ENCODE measurements at regions of chr3 and their contacts with region 1.

Region 1: DNA sequence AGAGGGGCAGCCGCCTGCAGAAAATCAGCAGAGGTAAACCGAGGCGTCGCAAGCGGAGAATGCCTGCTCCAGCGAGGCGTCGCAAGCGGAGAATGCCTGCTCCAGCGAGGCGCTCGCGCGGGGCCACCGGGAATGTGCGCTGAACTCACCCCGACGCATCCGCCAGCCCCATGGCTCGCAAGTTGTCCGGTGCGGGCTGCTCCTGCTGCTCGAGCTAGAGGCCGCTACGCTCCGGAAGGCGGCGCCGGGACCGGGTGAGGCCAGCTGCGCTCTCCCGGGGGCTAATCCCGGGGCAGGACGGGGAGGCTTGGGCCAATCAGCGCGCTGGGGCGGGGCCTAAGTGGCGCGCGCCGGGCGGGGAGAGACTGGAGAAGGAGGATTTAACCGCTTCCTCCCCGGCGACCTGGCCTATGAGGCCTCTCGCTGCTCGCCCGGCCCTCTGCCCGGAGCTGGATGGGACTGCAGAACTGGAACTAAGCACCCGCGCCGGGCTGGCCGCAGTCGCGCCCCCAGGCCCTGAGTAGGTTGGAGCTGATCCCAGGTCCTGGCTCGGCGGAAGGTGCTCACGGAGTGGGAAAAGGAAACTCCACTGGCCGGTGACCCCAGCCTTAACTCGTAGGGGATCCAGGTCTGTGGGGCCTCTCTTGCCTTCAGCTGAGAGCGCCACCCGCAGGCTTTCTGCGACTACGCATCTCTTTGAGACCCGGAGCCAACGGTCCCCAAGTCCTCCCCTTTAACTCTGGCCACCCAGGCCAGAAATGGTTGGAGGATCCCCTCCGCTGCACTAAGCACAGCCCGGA is at the start of gene SLC26A6:
- DNase-seq: peak; percentile 99
- ATAC-seq: peak; percentile 91
- H3K4me3 Mint-ChIP-seq: peak within 1 kb of the TSS; percentile 84
- H3K27ac Mint-ChIP-seq: peak within 1 kb of the TSS; percentile 94
- H3K4me1 Mint-ChIP-seq: peaks cover 32% of the 10 kb centered on the region
- H3K27me3 Mint-ChIP-seq: no peaks in the 10 kb centered on the region
- CTCF ChIP-seq: peak; percentile 62
- total RNA-seq, gene SLC26A6: 57.2 to 58.9 TPM (median 57.8 TPM) in 3 replicates

Region 2: DNA sequence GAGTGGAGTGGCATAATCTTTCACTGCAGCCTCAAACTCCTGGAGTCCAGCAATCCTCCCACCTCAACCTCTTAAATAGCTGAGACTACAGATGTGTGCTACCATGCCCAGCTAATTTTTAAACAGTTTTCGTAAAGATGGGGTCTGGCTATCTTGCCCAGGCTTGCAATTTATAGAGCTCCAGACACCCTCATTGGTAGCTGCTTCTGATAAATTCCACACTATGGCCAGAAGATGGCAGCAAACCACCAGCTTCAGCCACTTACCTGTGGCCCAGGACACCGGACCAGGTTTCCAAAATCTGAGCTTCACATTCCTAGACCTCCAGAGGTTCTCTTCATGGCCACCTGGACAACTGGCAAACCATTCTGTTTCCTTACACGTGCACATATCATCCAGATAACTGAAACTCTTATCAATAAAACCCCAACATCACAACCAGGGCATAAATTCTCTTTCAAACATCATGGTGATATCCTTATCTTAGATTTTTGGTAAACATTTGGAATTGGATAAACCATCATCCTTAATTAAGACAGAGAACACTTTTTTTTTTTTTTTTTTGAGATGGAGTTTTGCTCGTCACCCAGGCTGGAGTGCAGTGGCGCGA is 234.5 kb before region 1 on chr3:
- CTCF ChIA-PET with region 1: interaction called, 11 read pairs
- POLR2A ChIA-PET with region 1: no interaction called
- DNase-seq: peak; percentile 50
- ATAC-seq: peak; percentile 63
- H3K4me3 Mint-ChIP-seq: no peak overlapping the region
- H3K27ac Mint-ChIP-seq: peak overlapping the region; percentile 88
- H3K4me1 Mint-ChIP-seq: peaks cover 11% of the 10 kb centered on the region
- H3K27me3 Mint-ChIP-seq: peaks cover 2% of the 10 kb centered on the region
- CTCF ChIP-seq: peak; percentile 68

Region 3: DNA sequence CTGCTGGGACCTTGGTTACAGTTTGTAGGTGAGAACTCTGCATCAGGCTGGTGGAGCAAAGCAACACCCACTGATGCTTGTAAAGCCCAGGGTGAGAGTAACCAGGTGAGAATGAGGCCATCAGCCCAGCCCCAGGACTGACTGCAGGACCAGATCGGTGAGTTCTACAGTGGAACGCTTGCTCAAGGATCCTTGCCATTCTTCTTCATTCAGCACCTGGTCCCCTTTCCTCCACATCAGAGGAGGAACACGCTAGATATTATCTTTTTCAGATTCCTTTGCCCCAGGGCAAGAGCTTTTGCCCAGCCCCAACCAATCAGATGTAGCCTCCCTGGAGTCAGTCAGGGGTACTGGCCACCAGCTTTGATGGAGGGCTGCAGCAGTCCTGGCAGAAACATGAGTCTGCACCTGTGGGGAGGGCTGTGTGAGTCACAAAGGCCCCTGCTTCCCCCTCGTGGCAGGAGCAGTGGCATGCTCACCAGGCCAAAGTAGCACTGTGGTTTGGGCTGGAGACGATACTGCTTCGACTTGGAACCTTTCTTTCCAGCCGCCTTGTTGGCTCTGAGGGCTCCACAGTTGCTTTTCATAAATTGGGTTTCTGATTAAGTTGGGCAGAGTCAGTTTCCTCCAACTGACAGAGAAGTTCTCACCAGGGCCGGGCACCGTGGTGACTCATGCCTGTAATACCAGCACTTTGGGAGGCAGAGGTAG is 127.9 kb before region 1 on chr3:
- CTCF ChIA-PET with region 1: interaction called, 10 read pairs
- POLR2A ChIA-PET with region 1: no interaction called
- DNase-seq: peak; percentile 84
- ATAC-seq: peak; percentile 85
- H3K4me3 Mint-ChIP-seq: no peak overlapping the region
- H3K27ac Mint-ChIP-seq: peak overlapping the region; percentile 90
- H3K4me1 Mint-ChIP-seq: peaks cover 36% of the 10 kb centered on the region
- H3K27me3 Mint-ChIP-seq: no peaks in the 10 kb centered on the region; the same call in none of the 2 replicates
- CTCF ChIP-seq: 0 out of 2 replicates have a peak, but pooled peaks have one; percentile 17

Region 4: DNA sequence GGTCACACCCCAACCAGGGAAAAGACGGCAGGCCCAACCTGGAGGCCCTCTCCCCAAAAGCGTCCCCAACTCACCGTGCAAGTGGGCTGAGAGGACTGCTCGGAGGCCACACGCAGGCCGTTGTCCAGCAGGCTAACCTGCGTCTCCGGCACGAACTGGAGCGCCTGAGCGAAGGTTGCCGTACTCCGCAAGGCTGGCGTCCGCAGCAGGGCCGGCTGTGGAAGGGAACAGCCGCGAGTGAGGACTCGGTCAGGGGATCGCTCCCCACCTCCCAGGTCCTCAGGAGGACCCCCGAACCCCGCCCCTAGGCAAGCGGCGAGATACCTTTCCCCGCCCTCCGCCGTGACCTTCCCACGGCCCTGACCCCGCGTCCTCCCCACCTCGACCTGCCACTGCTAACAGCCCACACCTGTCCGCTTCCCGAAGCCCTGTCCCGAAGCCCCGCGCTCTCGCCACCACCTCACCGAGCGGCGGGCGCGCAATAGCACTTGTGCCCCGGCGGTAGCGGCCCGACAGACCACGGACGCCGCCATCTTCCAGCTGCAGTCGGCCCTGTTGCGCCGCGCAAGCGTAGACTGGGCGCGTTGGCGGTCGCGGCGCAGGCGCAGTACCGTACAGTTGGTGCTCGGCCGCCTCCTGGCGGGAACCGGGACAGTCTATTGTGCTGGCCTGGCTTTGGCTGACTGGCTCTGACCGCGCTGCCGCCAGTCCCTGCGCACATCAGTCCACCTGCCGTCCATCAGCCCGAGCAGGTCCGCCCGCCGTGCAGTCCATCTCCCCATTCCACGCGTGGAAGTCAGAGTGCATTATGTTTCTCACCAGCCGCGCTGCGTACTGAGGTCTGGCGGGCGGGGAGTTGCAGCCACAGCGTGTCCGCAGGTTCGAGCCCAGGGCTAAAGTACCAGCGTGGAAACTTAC is 26.1 kb before region 1 on chr3 and contains the start of gene UQCRC1:
- CTCF ChIA-PET with region 1: interaction called, 33 read pairs
- POLR2A ChIA-PET with region 1: interaction called, 11 read pairs
- DNase-seq: peak; percentile 95
- ATAC-seq: peak; percentile 99
- H3K4me3 Mint-ChIP-seq: peak within 1 kb of the TSS; percentile 95
- H3K27ac Mint-ChIP-seq: peak within 1 kb of the TSS; percentile 94
- H3K4me1 Mint-ChIP-seq: peaks cover 11% of the 10 kb centered on the region
- H3K27me3 Mint-ChIP-seq: no peaks in the 10 kb centered on the region
- CTCF ChIP-seq: peak; percentile 39; the same call in 1 of the 2 replicates
- total RNA-seq, gene UQCRC1: 313 to 326 TPM (median 323 TPM) in 3 replicates

Region 5: GRCh38 chr3:48656061-48656840 is 20.8 kb after region 1 on chr3:
- CTCF ChIA-PET with region 1: interaction called, 51 read pairs
- POLR2A ChIA-PET with region 1: interaction called, 41 read pairs
- DNase-seq: peak; percentile 91
- ATAC-seq: peak; percentile 90
- H3K4me3 Mint-ChIP-seq: peak overlapping the region; percentile 63
- H3K27ac Mint-ChIP-seq: peak overlapping the region; percentile 78
- H3K4me1 Mint-ChIP-seq: peaks cover 13% of the 10 kb centered on the region
- H3K27me3 Mint-ChIP-seq: peaks cover 4% of the 10 kb centered on the region; the same call in 1 of the 2 replicates
- CTCF ChIP-seq: peak; percentile 47

Region 6: DNA sequence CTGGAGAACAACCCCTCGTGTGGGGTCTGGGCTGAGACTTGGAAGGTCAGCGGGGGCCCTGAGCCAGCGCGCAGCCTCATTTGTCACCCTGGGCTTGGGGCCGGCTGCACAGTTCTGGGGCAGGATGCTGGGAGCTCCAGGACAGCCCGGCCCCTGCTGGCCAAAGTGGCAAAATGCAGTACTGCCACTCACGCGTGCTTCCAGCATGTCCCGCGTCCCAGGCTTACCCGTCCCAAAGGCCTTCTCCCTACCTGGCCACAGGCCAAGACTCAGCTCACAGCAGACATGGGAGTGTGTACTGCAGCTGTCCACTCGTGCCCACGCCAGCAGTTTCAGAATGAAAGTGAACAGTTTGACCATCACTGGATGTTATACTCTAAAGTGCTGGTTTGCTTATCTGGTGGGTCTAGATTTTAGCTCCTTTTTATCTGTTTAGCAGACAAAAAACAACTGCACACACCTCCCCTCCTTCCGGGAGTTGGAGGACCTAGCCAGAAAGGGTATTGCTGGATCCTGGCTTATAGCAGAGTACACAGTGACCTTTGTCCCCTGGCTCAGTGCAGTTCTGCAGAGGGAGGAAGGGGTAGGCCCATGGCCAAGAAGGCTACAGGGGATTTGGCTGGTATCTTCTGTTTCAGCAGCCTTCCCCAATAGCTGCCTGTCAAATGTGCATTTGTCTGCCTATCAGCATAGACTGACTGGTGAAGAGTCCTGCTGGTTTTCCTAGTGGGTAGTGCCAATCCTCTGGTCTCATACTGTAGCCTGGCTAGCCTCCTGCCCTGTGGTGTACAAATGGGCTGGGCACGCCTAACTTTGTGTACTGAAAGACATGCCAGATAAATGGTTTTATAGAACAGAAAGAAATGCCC is 104.8 kb after region 1 on chr3:
- CTCF ChIA-PET with region 1: interaction called, 10 read pairs
- POLR2A ChIA-PET with region 1: no interaction called
- DNase-seq: peak; percentile 90
- ATAC-seq: peak; percentile 99
- H3K4me3 Mint-ChIP-seq: no peak overlapping the region
- H3K27ac Mint-ChIP-seq: no peak overlapping the region
- H3K4me1 Mint-ChIP-seq: no peaks in the 10 kb centered on the region
- H3K27me3 Mint-ChIP-seq: no peaks in the 10 kb centered on the region; the same call in 1 of the 2 replicates
- CTCF ChIP-seq: peak; percentile 77

Region 7: DNA sequence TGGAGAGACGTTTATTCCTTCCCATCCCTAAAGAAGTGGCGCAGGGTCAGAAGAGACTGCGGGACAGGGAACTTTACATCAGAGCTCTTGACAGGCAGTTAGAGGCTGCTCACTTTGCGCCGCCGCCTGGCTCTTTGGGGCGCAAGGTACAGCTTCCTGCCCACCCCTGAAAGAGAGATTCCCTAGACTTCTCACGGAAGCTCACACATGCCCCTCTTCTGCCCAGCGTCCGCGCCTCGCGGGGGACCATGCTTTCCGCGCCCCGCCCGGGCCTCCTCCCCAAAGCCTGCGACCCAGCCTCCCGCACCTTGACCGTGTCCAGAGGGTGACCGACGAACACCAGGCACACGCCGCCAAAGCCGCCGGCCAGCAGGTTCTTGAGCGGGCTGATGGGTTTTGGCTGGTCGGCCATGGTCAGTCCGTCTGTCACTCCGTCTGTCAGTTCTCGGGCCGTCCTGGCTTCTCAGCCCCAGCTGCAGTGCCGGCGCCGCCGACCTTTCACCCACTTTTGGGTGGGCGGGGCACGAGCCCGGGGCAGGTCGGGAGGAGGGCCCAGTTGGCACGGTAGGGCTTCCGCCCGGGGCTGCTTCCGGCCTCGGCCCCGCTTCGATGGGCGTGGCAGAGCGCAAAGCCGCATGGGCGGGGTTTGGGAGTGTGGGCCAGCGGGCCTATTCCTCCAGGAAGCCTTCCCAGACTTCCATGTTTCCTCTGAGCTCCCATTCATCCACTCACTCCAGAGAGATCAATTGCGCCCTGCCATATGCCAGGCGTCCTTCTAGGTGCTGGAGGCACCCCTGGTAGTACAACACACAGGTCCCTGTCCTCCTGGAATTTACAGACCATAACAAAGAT is 263.2 kb after region 1 on chr3 and contains the start of gene SLC25A20:
- CTCF ChIA-PET with region 1: no interaction called
- POLR2A ChIA-PET with region 1: no interaction called
- DNase-seq: peak; percentile 95
- ATAC-seq: peak; percentile 98
- H3K4me3 Mint-ChIP-seq: peak within 1 kb of the TSS; percentile 90
- H3K27ac Mint-ChIP-seq: peak within 1 kb of the TSS; percentile 86
- H3K4me1 Mint-ChIP-seq: peaks cover 16% of the 10 kb centered on the region
- H3K27me3 Mint-ChIP-seq: no peaks in the 10 kb centered on the region; the same call in 1 of the 2 replicates
- CTCF ChIP-seq: no peak
- total RNA-seq, gene SLC25A20: 3.9 to 6.3 TPM (median 4.9 TPM) in 3 replicates

Measured in WTC11 (cell line).